ENCODE measurements at regions of chr11 and their contacts with region 1.

Region 1: GRCh38 chr11:69101115-69101791 is 52.5 kb downstream of the TPCN2 start:
- DNase-seq: peak; percentile 33
- H3K4me3 ChIP-seq: no peak overlapping the region
- H3K27ac ChIP-seq: no peak overlapping the region
- H3K27me3 ChIP-seq: no peaks in the 10 kb centered on the region
- CTCF ChIP-seq: peak; percentile 99

Region 2: DNA sequence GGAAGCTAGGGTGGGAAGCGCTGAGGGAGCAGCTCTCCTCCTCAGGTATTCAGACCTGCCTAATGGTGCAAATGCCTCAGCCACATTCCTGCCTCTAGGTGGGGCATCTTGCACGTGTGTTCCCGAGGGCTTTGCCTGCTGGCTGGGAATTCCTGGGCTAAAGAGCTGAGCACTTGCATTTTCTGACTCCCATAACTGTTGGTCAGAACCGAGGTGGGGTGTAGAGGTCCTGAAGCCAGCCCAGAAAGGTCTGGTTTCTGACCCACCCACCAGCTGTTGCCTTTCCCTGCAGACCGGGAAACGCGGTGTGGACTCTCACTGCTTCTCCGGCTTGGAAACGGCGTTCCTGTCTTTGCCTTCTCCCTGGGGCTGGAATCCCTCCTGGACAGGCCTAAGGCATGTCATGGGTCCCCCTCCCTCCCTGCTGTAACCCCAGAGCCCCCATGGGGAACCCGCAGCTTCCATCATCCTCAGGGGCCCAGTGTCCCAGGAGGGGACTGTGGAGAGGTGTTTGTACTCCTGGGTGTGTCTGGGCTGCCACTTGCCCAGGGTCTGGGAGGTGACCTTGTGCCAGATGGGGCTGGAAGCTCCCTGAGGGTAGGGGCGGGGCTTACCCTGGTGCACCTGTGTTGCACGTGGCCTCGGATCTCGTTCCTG is 30.5 kb after region 1 on chr11:
- CTCF ChIA-PET with region 1: interaction called, 11 read pairs
- POLR2A ChIA-PET with region 1: no interaction called
- DNase-seq: peak; percentile 45
- H3K4me3 ChIP-seq: no peak overlapping the region
- H3K27ac ChIP-seq: no peak overlapping the region
- H3K27me3 ChIP-seq: no peaks in the 10 kb centered on the region
- CTCF ChIP-seq: peak; percentile 83

Region 3: DNA sequence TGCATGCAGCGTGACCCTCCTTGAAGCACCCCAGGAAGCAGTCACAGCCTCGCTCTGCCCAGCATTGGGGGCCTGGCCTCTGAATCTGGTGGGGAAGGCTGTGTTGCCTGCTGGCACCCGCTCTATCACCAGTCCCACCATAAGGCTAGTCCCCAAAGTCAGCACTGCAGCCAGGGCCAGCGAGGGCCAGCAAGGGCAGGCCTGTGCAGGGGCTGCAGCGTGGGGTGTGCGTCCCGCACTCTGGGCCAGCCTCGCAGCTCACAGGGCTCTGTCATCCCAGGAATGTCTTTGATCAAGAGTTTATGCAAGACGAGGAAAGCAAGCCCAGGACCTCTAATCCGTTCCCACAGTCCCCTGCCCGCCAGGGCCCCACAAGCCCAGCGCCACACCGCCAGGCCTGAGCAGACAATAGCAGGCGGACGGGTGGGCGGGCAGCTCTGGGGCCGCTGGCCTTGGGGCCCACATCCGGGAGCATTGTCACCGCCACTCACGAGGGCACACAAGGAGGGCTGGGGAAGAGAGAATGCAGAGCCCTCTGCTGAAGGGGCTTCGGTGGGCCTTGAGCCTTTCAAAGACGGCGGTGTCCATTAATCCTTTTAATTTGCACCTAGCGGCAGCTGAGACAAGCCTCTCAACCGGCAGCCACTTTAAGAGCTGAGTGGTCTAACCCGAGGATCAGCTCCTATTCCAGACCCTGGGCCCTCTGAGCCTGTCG is 556.8 kb after region 1 on chr11:
- CTCF ChIA-PET with region 1: interaction called, 17 read pairs
- POLR2A ChIA-PET with region 1: interaction called, 4 read pairs
- DNase-seq: no peak
- H3K4me3 ChIP-seq: no peak overlapping the region
- H3K27ac ChIP-seq: no peak overlapping the region
- H3K27me3 ChIP-seq: no peaks in the 10 kb centered on the region
- CTCF ChIP-seq: no peak

Region 4: GRCh38 chr11:69670158-69670845 is 569.0 kb after region 1 on chr11:
- CTCF ChIA-PET with region 1: interaction called, 43 read pairs
- POLR2A ChIA-PET with region 1: interaction called, 13 read pairs
- DNase-seq: peak; percentile 69
- H3K4me3 ChIP-seq: no peak overlapping the region
- H3K27ac ChIP-seq: no peak overlapping the region
- H3K27me3 ChIP-seq: no peaks in the 10 kb centered on the region
- CTCF ChIP-seq: peak; percentile 97